ENCODE measurements at regions of chr10 and their contacts with region 1.

Region 1: GRCh38 chr10:28280652-28281051 is 22.2 kb downstream of the MPP7 start:
- DNase-seq: peak; percentile 11 to 90
- H3K4me3 ChIP-seq: no peak overlapping the region
- H3K27ac ChIP-seq: peak overlapping the region; percentile 83 to 87
- H3K4me1 ChIP-seq: peaks cover 3 to 65% of the 10 kb centered on the region in 2 donors
- H3K27me3 ChIP-seq: no peaks in the 10 kb centered on the region
- CTCF ChIP-seq: peak in 1 of 3 experiments; percentile 11

Region 2: DNA sequence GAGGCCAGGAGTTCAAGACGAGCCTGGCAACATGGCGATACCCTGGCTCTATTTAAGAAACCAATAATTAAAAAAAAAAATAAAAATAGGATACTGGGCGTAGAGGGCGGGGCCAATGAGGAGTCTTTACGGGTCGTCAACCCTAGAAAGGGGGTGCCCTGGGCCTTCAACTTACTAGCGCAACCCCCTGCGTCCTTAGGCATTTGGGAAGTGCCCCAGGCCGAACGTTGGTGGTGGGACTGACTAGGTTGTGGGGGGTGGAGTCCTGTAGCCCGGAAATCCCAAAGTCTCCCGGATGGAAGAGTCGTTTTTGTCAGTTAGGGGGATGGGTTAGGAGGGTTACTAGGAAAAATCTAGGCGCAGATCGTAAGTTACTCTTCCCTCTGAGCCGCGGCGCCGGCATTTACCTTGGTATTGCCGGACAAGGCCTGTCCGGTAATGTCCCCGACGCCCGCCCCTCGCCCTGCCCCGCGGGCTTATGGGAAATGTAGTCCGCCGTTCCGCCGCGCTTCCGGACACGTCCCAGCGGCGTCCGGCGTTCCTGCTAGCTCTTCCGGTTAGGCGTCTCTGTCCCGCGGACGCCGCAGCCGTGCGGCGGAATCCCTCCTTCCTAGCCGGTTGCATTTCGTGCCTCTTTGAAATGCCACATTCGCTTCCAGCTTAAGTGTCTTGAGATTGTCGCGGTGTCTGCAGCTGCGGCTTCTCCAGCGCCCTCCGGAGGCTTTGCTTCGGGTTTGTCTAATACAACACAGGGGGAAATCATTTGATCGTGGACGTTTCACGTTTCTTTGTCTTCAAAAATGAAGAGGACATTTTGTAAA is 1038.8 kb before region 1 on chr10:
- intact Hi-C with region 1: loop called (anchors 5 kb)
- DNase-seq: peak; percentile 48 to 94
- H3K4me3 ChIP-seq: peak overlapping the region; percentile 79 to 86
- H3K27ac ChIP-seq: peak overlapping the region; percentile 96 to 98
- H3K4me1 ChIP-seq: peaks cover 0 to 18% of the 10 kb centered on the region in 2 donors
- H3K27me3 ChIP-seq: no peaks in the 10 kb centered on the region
- CTCF ChIP-seq: peak; percentile 26 to 50 (median 38)

Region 3: DNA sequence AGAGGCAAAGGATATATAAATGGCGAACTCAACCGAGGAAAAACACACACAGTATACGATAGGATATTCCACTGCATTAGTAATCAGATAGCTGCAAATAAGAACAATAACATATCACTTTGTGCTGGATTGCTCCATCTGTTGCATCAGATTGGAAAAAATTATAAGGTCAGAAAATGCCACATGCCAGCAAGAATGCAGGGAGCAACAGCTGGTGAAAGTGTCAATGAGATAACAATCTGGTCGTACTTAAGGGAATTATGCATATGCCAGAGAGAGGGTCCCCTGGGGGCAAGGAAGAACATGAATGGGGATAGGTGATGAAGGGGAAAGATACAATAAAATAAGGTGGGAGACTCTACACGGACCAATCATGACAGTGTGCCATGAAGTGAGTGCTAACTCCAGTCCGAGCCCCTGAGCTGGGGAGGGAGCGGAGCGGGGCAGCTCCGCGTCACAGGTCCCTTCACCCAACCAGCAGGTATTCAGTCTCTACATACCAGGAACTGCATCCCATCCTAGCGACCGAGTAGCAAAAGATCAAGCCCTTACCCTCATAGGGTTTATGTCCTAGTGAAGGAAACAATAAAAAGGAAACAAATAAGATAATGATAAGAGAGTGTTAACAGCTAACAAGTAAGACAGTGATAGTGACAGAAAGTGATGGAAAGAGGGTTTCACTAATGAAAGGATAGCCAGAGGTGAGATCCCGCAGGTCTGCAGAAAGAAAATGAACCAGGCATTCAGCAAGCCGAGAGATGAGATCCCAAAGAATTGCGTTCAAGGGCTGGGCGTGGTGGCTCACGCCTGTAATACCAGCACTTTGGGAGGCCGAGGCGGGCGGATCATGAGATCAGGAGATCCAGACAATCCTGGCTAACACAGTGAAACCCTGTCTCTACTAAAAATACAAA is 12.8 kb after region 1 on chr10:
- intact Hi-C with region 1: loop called (anchors 2 kb)
- DNase-seq: no peak
- H3K4me3 ChIP-seq: no peak overlapping the region
- H3K27ac ChIP-seq: peak overlapping the region; percentile 83 to 84
- H3K4me1 ChIP-seq: peaks cover 8 to 51% of the 10 kb centered on the region in 2 donors
- H3K27me3 ChIP-seq: no peaks in the 10 kb centered on the region
- CTCF ChIP-seq: no peak

Region 4: DNA sequence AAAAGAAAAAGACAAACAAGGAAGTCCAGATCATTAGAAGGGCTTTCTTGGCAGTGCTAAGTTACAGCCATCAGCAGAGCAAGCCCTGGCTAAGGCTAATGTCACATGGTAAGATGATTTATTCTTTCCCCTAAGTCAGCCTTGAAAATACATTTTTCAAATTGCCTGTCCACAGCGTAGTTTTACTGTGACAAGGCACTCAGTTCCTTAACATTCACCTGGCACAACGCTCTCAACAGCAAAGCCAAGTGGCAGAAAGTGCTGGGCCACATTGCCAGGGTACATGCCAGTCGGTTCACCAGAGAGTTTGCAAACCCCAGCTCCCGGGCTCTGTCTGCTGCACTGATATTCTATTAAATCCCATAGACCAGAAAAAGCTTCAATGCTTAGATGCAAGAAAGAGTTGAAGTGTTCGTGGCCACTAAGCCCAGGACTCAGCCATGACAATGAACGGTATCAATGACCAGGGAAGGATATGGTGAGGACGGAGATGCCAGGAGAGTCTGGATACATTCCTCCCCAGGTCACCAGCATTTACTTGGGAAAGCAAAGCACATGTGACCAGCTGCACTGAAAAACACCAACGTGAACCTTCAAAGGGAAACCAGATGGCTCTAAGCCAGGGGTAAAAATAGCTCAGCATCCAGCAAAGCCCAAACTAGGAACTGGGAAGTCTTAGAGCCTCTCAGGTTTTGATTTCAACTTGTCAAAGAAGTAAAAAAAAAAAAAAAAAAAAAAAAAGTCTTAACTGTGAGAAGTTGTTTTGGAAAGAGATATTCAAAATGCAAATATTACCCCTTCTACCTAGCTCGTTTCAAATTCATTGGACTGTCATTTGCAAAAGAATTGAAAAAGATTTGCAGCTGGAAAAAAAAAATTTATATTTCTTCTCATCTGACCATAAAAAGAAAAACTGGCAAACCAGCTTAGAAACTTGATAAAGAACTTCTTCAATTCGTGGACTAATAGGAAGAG is 46.2 kb after region 1 on chr10:
- intact Hi-C with region 1: loop called (anchors 1 kb)
- DNase-seq: peak; percentile 46 to 89
- H3K4me3 ChIP-seq: peak overlapping the region in 1 of 2 donors; percentile 25
- H3K27ac ChIP-seq: peak overlapping the region; percentile 73 to 86
- H3K4me1 ChIP-seq: peaks cover 0 to 17% of the 10 kb centered on the region in 2 donors
- H3K27me3 ChIP-seq: no peaks in the 10 kb centered on the region
- CTCF ChIP-seq: no peak

Region 5: DNA sequence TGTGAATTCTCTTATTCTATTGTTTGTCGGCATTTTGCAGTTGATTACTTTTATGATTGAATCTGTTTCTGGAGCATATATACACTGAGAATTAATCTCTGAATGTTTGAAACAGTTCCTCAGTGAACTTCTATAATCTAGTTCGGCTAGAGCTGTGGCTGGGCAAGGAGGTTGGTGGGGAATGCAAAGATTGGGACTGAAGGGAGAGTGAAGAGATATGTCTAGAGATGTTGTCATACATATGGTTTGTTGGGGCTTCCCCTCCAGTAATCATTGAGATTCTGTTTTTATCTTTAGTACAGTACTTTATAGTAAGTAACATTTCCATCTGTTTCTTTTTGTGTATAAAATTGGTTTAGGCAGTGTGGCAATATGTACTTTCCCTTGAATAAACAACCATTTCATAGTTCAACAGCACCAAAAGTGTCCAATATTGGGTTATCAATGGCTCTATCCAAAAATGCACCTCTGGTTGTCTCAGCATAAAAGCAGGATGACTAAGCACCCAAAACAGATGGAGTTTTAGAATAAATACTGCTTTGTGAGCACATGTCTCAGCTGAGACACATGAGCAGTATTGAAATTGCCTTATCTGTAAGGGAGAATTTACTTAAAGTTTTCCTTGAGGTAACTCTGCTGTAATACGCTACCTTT is 289.0 kb after region 1 on chr10:
- intact Hi-C with region 1: no loop called
- DNase-seq: no peak
- H3K4me3 ChIP-seq: no peak overlapping the region
- H3K27ac ChIP-seq: no peak overlapping the region
- H3K4me1 ChIP-seq: peaks cover 0 to 28% of the 10 kb centered on the region in 2 donors
- H3K27me3 ChIP-seq: no peaks in the 10 kb centered on the region
- CTCF ChIP-seq: no peak